K562 (cell line): ENCODE measurements at regions of chr1 and their contacts with region 1.

Region 1: DNA sequence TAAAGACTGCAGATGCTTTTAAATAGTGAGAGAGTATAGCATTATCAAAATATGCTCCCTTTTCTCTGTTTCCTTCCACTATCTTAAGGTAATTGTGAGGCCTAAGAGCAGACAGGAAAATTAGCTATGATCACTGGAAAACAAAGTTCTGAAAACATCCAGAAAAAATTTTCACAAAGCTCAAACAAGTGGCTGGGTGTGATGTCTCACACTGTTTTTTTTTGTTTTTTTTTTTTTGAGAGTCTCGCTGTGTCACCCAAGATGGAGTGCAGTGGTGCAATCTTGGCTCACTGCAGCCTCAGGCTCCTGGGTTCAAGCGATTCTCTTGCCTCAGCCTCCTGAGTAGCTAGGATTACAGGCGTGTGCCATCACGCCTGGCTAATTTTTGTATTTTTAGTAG is 7.2 kb downstream of the WDTC1 start:
- DNase-seq: no peak
- ATAC-seq: no peak
- H3K4me3 ChIP-seq: no peak overlapping the region
- H3K27ac ChIP-seq: no peak overlapping the region
- H3K4me1 ChIP-seq: no peaks in the 10 kb centered on the region; a peak in 2 of 5 replicates
- H3K27me3 ChIP-seq: no peaks in the 10 kb centered on the region
- CTCF ChIP-seq: no peak
- EP300 ChIP-seq: no peak
- POLR2A ChIP-seq: no peak
- RAD21 ChIP-seq: no peak

Region 2: DNA sequence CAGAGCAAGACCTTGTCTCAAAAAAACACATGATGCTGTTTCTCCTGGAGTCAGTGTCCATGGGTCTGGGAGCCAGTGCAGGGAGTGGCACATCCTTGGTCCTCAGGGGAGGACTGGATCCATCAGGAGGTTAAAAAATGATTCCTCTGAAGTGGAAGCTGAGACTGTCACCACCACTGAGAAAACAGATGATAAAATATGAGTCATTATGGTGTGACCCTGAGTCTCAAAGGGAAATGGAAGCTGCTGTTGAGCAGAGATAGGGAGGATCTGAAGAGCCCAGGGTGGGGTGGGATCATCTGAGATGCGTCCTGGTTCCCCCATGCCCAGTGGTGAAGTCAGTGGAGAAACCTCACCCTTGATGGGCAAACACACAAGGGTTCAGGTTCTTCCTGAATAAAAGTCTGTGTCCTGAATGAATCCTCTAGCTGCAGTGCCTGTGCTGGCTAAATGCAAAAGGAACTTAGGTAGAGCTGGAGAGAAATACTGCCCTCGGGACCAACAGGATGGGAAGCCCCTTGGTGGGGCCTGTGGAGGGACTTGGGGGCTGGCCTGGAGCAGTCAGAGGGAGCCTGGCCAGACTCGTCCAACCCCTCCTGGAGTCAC is 167.4 kb before region 1 on chr1:
- CTCF ChIA-PET with region 1: no interaction called
- POLR2A ChIA-PET with region 1: no interaction called
- in situ Hi-C with region 1: no loop called
- intact Hi-C with region 1: no loop called
- DNase-seq: peak; percentile 93 to 99 (median 98)
- ATAC-seq: peak; percentile 95
- H3K4me3 ChIP-seq: no peak overlapping the region
- H3K27ac ChIP-seq: peak overlapping the region; percentile 79
- H3K4me1 ChIP-seq: peaks cover 22 to 39% of the 10 kb centered on the region in 2 experiments
- H3K27me3 ChIP-seq: no peaks in the 10 kb centered on the region
- CTCF ChIP-seq: no peak
- EP300 ChIP-seq: peak; percentile 97
- POLR2A ChIP-seq: no peak
- RAD21 ChIP-seq: no peak

Region 3: DNA sequence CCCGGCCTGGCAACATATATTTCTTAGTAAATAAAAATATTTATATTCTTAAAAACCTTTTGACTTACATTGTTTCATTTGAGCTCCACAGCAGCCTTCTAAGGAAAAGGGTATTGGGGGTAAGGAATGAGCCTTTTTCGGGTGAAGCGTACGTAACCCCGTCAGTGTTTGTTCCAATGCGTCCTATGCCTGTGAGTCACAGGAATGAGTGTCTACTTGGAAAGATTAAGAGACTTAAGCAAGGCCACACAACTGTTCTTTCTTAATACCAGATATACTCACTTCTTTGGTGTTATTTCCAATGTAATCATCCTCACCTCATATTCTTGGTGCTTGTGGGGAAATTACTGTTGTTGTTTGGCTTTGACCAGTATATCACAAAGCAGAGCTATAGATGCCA is 15.5 kb after region 1 on chr1:
- CTCF ChIA-PET with region 1: no interaction called
- POLR2A ChIA-PET with region 1: interaction called, 16 read pairs
- in situ Hi-C with region 1: no loop called
- intact Hi-C with region 1: no loop called
- DNase-seq: no peak
- ATAC-seq: no peak
- H3K4me3 ChIP-seq: no peak overlapping the region
- H3K27ac ChIP-seq: no peak overlapping the region
- H3K4me1 ChIP-seq: no peaks in the 10 kb centered on the region
- H3K27me3 ChIP-seq: no peaks in the 10 kb centered on the region
- CTCF ChIP-seq: no peak
- EP300 ChIP-seq: no peak
- POLR2A ChIP-seq: no peak
- RAD21 ChIP-seq: no peak